AG04449 (cell line): ENCODE measurements at regions of chr9 and their contacts with region 1.

Region 1: DNA sequence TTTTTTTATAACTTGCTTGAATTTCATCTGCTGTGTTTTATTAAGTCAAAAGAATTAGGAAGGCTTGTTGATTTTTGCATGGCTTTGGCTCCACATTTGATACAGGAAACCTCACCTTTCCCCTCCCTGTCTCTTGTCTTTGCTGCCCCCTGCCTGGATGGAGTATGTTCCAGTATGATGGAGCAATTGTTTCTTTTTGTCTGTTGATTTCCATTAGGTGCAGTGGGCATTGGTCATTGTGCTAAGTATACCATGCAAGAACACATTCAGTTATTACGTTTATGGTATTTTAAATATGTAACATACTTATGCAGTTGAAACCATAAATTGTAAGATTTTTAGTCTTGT is 19.6 kb downstream of the TJP2 start:
- DNase-seq: no peak
- H3K4me3 ChIP-seq: no peak overlapping the region
- CTCF ChIP-seq: no peak

Region 2: GRCh38 chr9:69035438-69036308 is 158.0 kb before region 1 on chr9 and contains the start of gene FXN:
- CTCF ChIA-PET with region 1: interaction called, 69 read pairs
- POLR2A ChIA-PET with region 1: interaction called, 6 read pairs
- DNase-seq: no peak
- H3K4me3 ChIP-seq: peak within 1 kb of the TSS; percentile 89
- CTCF ChIP-seq: peak; percentile 99

Region 3: DNA sequence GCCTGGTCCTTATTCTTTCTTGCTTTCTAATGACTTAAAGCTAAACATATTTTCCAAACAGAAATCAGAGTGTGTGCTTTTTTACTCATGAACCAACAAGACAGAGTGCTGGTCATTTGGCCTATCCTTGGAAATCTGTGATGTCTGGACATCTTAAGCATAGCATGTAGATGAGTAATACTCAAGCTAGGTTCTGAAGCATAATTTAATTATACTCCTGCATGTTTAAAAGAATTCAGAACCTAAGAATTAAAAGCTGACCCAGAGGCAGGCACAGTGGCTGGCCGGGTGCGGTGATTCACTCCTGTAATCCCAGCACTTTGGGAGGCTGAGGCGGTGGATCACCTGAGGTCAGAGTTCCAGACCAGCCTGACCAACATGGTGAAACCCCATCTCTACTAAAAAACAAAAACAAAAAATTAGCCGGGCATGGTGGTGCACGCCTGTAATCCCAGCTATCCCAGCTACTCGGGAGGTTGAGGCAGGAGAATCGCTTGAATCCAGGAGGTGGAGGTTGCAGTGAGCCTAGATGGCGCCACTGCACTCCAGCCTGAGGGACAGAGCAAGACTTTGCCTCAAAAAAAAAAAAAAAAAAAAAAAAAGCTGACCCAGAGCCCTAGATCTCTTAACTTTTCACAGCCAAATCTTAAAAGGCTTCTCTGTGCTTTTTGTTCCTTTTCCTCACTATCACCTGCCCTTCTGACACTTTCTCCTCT is 35.8 kb before region 1 on chr9:
- CTCF ChIA-PET with region 1: interaction called, 13 read pairs
- POLR2A ChIA-PET with region 1: no interaction called
- DNase-seq: no peak
- H3K4me3 ChIP-seq: no peak overlapping the region
- CTCF ChIP-seq: peak; percentile 12

Region 4: DNA sequence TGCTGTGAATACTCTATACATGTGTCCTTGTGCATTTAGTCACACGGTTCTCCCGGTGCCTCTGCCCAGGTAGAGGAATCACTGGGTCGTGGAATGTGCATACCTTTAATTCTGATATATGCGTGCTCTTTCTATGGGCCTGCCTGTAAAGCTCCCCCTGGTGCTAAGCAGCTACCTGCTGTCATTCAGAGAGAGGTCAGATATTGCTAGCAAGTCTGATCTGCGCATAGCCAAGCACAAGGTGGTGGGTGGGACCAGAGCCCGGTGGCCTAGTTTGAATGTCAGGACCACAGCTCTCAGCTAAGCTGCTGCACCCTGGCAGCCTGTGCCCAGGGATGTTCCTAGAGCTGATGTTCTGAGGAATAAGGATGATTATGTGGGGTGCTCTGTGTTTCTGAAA is 13.8 kb after region 1 on chr9:
- CTCF ChIA-PET with region 1: interaction called, 20 read pairs
- POLR2A ChIA-PET with region 1: no interaction called
- DNase-seq: no peak
- H3K4me3 ChIP-seq: no peak overlapping the region
- CTCF ChIP-seq: no peak

Region 5: DNA sequence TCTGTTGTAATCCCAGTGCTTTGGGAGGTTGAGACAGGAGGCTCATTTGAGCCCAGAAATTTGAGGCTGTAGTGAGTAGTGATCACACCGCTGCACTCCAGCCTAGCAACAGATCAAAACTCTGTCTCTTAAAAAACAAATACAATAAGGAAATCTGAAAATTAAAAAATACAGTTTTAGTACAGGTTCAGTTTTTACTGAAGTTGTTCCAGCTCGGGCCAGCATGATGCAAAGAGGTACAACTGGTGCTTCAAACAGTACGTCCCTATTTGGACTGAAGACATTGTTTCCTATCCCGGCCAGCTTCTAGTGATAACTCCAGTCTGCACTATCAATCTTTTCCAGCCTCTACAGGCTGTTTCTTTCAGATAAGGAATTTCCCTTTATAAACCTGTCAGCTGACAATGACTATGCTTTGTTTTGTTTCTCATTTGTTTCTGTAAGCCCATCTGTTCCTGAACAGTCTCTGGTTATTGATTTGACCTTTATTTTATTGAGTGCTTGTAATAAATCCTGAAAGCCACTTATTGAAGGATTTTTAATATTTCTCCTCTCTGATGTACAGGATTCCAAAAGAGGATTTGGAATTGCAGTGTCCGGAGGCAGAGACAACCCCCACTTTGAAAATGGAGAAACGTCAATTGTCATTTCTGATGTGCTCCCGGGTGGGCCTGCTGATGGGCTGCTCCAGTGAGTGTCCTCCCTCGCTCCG is 22.3 kb after region 1 on chr9:
- CTCF ChIA-PET with region 1: interaction called, 18 read pairs
- POLR2A ChIA-PET with region 1: no interaction called
- DNase-seq: no peak
- H3K4me3 ChIP-seq: no peak overlapping the region
- CTCF ChIP-seq: no peak

Region 6: GRCh38 chr9:69223605-69224004 is 29.9 kb after region 1 on chr9:
- CTCF ChIA-PET with region 1: interaction called, 15 read pairs
- POLR2A ChIA-PET with region 1: no interaction called
- DNase-seq: peak; percentile 38
- H3K4me3 ChIP-seq: no peak overlapping the region
- CTCF ChIP-seq: peak; percentile 82

Region 7: DNA sequence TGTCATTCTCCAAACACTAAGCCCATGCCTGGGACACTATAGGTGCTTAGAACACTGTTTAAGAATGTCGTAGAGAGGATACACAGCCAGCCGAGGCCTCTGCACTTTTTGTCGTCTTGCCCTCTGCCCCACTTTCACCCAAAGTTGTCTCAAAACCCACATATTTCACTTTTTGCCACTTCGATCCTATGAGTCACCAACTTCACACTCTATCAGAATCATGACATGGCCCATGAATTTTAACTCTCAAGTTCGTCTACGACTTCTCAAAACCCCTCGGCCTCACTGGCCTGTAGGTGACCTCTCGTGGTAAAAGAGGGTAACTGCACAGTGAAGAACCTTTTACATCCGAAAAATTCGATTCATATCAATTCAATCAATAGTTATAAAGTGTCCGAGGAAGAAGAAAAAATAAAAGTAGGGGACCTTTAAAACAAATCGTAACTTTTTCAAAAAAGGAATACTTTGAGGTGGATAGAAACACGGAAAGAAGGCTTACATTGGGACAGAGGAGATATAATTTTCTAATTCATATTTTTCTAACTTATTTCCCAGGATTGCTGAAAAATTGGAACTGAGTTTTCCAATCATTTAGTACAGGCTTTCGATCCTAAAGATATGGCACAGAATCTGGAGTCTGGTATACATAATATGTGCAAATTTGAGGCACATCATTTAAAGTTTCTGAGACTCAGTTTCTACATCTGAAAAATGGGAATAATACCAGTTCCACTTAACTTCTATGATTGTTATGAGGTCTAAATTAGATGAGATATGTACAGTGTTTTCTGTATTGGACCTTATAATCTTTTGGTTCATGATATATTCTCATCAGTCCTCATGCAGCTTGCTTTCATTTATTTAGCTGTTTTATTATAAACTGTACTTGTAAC is 355.9 kb after region 1 on chr9:
- CTCF ChIA-PET with region 1: no interaction called
- POLR2A ChIA-PET with region 1: no interaction called
- DNase-seq: no peak
- H3K4me3 ChIP-seq: no peak overlapping the region
- CTCF ChIP-seq: peak; percentile 70